ENCODE measurements at regions of chr2 and their contacts with region 1.

Region 1: DNA sequence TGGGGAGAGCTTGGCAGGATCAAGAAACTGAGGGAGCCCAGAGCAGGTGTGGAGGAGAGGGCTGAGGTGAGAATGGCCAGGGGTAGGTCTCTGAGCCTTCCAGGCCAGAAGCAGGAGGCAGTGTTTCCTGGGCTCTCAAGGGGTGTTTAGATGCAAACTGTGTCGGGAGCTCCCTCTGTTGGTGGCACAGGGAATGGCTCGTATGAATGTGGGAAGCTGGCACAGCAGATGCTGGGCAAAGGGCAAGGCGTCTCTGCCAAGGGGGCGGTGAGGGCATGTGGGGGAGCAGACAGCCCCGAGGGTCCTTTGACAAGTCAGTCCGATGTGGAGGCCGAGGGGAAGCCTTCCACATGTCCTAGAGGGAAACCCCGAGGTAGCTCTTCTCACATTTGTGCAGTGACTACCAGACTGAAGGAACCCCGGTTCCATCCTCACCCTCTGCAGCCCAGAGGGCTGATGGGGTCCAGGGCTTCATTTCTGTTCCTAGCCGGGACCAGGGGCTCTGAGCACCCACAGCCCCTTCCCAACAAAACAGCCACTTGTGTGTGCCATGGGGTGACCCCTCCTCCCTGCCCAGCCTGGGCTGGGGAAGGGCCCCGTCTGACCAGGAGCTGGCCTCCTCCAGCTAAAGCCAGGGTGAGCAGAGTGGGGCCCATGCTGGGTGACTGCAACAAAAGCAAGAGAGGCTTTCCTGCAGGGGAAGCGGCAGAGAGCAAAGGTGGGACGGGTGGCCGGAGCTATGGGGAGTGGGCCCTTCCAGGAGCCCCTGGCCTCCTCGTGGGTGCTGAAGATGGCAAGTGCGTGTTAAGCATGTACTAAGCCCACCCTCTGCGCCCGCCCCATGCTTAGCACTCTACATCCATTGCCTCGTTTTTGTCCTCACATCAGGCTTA is 103.4 kb downstream of the SEPTIN10 start:
- DNase-seq: peak; percentile 82
- ATAC-seq: peak; percentile 57 to 74

Region 2: GRCh38 chr2:108855194-108855593 is 655.2 kb before region 1 on chr2:
- intact Hi-C with region 1: loop called in 1 of 2 experiments (anchors 10 kb)
- DNase-seq: no peak
- ATAC-seq: no peak

Region 3: DNA sequence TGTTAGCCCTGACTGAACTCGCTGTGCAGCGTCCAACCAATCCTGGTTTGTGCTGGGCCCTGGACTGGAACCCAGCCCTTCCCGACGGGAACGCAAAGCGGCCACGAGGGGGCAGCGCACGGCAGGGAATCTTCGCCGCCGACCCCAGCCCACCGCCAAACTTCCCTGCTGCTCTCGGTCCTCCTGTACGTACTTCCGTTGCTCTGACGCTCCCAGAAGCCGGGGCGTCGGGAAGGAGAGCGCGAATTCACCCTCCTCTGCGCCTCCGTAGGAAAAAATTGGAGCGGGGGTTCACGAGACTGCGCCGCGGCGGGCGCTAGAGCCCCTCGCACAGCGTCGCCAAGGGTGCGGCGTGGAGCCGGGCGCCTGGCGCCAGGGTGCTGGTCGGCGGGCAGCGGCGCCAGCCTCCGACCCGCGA is 382.3 kb before region 1 on chr2:
- intact Hi-C with region 1: loop called (anchors 1 to 5 kb)
- DNase-seq: peak; percentile 89
- ATAC-seq: peak; percentile 84 to 90

Region 4: GRCh38 chr2:109222825-109223471 is 287.4 kb before region 1 on chr2:
- intact Hi-C with region 1: loop called in 1 of 2 experiments (anchors 10 kb)
- DNase-seq: no peak
- ATAC-seq: peak in 1 of 2 donors; percentile 36

Region 5: DNA sequence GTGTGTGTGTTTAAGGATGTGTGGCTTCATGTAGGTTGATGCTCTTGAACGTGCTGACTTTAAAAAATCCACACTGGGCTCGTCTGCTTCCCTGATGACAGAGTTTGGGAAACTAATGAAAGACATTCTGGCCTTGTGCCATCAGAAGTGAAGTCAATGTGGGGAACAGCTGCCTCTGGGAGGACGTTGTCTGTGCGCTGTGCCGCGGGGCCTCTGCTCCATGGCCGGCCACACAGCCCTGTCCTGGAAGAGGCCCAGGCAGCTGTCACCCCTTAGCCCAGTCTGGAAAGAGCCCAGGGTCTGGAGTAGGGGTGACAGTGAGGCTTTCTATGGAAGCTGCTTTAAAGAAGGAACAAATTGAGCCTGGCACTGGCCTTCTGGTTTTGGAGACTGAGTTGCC is 225.6 kb before region 1 on chr2:
- intact Hi-C with region 1: loop called in 1 of 2 experiments (anchors 5 kb)
- DNase-seq: peak; percentile 58
- ATAC-seq: peak; percentile 86 to 90

Region 6: DNA sequence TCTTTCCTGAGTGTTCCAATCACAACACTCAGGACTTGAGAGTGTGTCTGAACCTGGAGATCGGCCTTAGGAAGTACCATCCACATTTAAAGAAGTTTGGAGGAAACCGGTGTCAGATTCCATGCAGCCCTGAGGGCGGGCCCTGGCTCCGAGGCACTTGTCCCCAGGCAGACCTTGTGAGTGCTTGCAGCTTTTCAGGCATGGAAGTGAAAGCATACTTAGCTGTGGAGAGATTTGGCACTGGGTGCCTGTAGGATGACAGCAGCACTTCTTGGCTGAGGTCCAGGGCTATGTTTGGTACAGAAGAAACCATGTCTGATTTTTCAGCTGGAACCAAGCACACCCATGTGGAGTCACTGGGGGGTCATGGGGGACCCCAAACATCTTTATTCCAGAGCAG is 127.4 kb before region 1 on chr2:
- intact Hi-C with region 1: loop called in 1 of 2 experiments (anchors 10 kb)
- DNase-seq: peak; percentile 78
- ATAC-seq: peak; percentile 91 to 97